ENCODE measurements at regions of chr6 and their contacts with region 1.

Region 1: DNA sequence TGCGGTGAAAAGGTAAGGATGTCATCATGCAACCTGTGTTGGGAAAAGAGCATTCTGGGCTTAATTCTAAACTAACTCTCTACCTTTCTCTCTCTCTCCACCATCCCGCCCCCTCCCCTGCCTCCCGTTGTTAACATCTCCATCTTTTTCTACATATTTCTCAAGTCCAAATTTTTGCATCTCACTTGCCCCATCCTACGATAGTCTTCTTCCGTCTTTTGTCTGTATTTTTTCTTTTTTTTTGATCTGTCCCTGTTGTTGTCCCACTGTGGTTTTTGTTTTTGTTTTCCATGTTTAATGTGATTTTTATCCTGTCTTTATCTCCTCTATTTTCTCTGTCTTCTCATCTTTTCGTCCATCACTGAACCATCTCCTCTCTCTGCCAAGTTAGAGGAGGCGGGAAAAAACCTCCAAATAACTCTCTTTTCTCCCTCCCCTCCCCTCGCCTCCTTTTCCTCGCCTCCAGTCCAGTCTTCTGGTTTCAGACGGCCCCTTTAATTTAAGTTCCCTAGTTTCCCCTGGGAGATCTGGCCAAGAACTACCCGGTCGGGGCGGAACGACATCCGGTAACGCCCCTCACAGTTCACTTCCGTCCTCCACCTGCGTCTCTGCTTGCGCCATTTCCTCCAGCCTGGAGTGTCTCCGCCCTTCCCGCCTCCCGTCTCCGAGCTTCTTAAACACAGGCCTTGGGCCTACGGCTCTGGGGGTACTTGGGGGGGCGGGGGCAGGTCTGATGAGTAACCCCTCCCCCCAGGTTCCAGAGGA is at the start of gene NFKBIL1:
- DNase-seq: peak; percentile 89
- CTCF ChIP-seq: no peak

Region 2: DNA sequence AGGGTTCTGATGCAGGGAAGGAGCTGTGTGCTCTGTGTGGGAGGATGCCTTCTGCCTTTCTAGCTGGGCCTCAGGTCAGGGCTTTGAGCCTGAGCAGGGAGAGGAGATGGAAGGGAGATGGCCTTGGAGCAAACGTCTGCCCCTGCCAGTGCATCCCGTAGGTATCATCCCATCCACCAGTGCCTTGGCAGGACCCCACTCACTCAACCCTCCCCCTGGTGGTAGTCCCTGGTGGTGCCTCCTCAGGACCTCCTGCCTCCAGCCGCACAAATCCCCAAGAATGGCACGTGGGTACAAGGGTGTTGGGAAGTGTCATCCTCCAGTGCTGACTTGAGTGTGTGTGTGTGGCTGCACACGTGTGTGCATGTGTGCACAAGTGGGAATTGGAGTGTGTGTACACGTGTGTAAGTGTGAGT is 72.3 kb before region 1 on chr6:
- CTCF ChIA-PET with region 1: no interaction called
- POLR2A ChIA-PET with region 1: no interaction called
- DNase-seq: no peak
- CTCF ChIP-seq: no peak

Region 3: DNA sequence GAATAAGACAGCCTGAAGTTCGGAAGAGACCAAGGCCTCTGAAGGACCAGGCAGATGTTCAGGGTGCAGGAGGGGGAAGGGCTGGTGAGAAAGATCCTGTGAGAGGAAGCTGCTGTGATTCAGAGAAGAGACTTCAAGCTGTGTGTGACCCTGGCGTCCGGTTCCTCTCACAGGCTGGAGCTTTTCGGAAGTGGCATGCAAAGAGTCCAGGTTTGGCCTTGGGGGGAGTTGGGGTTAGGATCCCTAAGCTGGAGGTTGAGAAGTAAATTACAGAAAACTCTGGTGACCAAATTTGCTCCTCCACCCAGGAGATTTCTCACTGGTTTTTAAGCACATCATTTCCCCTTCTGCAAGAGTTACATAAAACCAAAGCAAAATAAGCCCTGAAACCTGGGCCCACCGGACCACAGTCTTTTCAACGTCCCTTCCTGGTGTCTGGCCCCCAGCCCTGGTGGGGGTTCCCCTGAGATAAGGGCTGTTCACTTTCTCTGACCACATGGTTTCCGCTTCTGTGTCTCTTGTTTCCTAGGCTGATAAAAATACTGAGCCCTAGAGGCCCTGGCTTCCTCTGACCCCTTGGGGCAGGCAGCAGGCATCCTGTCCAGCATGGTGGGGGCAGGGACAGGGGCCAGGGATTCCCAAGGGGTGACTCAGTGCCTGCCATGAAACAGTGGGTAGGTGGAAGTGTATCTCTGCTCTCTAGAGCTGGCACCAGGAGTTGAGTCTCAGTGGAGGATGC is 13.0 kb after region 1 on chr6:
- CTCF ChIA-PET with region 1: interaction called, 46 read pairs
- POLR2A ChIA-PET with region 1: interaction called, 6 read pairs
- DNase-seq: peak; percentile 74
- CTCF ChIP-seq: no peak

Region 4: GRCh38 chr6:31580807-31581433 is 33.8 kb after region 1 on chr6:
- CTCF ChIA-PET with region 1: interaction called, 2,725 read pairs
- POLR2A ChIA-PET with region 1: interaction called, 86 read pairs
- DNase-seq: peak; percentile 87
- CTCF ChIP-seq: peak; percentile 89

Region 5: GRCh38 chr6:31652925-31653718 is 106.0 kb after region 1 on chr6:
- CTCF ChIA-PET with region 1: interaction called, 13 read pairs
- POLR2A ChIA-PET with region 1: interaction called, 7 read pairs
- DNase-seq: peak; percentile 90
- CTCF ChIP-seq: no peak